Panc1 (cell line): ENCODE measurements at regions of chr1 and their contacts with region 1.

Region 1: DNA sequence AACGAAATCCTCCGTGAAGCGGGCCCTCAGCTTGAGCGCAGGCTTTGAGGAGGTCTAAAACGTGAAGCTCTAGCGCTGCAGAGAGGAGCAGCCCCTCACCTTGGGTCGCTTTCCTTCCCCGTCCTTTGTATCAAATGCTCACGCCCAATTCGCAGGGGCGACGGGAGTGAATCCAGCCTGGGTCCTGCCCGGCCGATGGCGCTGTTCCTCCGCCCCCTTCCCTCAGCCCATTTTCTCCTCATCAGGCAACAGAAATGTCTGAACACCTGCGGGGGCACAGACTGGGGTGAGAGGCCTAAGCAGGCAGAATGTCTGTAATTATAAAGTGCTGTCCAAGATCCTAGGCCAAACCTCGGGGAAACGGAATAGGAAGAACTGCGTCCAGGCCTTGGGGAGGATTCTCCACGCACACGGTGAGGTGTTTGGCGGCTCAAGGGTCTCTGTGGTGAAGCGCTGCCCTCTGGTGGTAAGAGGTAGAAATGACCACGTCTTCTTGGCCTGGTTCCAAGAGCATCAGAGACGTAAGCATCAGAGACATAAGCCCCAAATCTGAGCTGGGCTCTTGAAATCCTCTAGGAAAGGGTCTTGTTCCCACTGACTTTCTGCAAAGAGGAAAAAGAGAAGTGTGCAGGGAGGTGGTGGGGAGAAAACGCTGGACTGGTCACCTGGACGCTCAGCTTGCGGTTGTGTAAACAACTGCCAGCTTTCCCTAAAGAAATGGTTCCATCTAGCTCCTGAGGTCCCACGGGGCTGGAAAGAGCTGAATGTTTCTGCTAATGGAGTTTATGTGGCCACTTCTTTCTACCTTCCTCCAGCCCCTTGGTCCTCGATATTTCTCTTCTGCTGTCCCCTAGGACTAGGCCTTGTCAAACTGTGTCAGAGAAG is 92.1 kb upstream of the CD53 start:
- DNase-seq: no peak
- ATAC-seq: peak; percentile 56; the same call in 1 of the 2 replicates
- H3K4me3 ChIP-seq: no peak overlapping the region
- H3K27ac ChIP-seq: no peak overlapping the region
- H3K4me1 ChIP-seq: no peaks in the 10 kb centered on the region
- H3K27me3 ChIP-seq: no peaks in the 10 kb centered on the region
- CTCF ChIP-seq: peak; percentile 78

Region 2: DNA sequence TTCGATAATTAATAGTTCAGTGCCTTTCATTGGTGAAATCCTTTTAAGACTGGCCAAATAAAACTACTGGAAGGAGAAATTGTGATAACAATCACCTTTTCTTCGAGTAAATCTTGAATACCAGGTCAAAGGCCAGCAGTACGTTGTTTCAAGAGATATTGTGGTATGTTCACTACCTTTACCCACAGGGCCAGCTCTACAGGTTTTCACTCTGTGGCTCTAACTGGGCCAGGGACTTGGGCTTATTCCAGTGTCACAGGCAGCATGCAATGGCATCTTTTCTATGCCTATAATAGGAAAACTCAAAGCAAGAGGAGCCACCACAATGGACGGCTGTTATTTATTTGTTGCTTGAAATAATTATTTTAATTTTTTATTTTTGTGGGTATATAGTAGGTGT is 209.7 kb after region 1 on chr1:
- CTCF ChIA-PET with region 1: no interaction called
- POLR2A ChIA-PET with region 1: no interaction called
- in situ Hi-C with region 1: no loop called
- intact Hi-C with region 1: loop called (anchors 5 kb)
- DNase-seq: no peak
- ATAC-seq: no peak
- H3K4me3 ChIP-seq: no peak overlapping the region
- H3K27ac ChIP-seq: no peak overlapping the region
- H3K4me1 ChIP-seq: no peaks in the 10 kb centered on the region
- H3K27me3 ChIP-seq: peaks cover 2% of the 10 kb centered on the region; the same call in 1 of the 2 replicates
- CTCF ChIP-seq: no peak